ENCODE measurements at regions of chr6 and their contacts with region 1.

Region 1: GRCh38 chr6:97885828-97886227 is 602.8 kb upstream of the MMS22L start:
- DNase-seq: no peak
- H3K4me3 ChIP-seq: no peak overlapping the region
- H3K27ac ChIP-seq: no peak overlapping the region
- H3K4me1 ChIP-seq: no peaks in the 10 kb centered on the region
- H3K27me3 ChIP-seq: no peaks in the 10 kb centered on the region
- CTCF ChIP-seq: no peak
- POLR2A ChIP-seq: no peak

Region 2: GRCh38 chr6:98352348-98352747 is 466.5 kb after region 1 on chr6:
- intact Hi-C with region 1: loop called (anchors 5 kb)
- DNase-seq: no peak
- H3K4me3 ChIP-seq: no peak overlapping the region
- H3K27ac ChIP-seq: no peak overlapping the region
- H3K4me1 ChIP-seq: no peaks in the 10 kb centered on the region
- H3K27me3 ChIP-seq: no peaks in the 10 kb centered on the region
- CTCF ChIP-seq: no peak
- POLR2A ChIP-seq: no peak

Region 3: DNA sequence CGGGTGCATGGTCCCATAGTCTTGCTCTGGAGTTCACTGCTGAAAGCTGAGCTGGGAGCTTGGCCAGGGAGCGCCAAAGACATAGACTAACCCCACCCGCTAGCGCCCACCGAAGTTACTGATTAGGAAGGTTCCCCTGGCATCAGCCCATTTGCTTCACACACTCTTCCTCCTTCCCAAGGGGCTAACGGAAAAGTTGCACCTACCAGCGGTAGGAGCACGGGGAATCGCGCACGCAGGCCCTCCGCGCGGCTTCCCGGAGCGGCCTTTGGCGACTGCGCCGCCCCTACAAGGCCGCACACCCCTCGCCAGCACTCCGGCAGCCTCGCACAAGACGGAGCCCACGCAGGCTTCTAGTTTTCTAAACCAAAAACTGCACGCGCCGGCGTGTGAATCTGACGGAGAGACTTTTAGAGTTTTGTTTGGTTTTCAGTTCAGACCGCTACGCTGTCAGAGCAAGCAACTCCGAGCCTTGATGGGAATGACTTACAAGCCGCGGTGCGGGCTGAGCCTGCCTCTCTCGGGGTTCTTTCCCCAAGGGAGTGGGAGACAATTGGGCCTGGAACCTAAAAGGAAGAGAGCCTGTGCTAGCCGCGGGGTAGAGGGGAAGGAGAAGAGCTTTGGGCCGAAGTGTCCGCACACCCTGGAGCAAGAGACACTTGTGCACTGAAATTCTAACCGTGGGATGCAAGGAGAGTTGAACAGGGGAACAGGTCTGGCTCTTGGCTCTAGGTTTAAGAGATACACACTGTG is 947.7 kb after region 1 on chr6:
- intact Hi-C with region 1: no loop called
- DNase-seq: no peak
- H3K4me3 ChIP-seq: peak overlapping the region; percentile 44 to 74 (median 57)
- H3K27ac ChIP-seq: no peak overlapping the region
- H3K4me1 ChIP-seq: peaks cover 19 to 21% of the 10 kb centered on the region in 2 donors
- H3K27me3 ChIP-seq: peaks cover 14 to 97% of the 10 kb centered on the region in 2 donors
- CTCF ChIP-seq: no peak
- POLR2A ChIP-seq: no peak